Aorta (tissue), 5 donors: ENCODE measurements at regions of chr12 and their contacts with region 1.

Region 1: GRCh38 chr12:131894313-131894860 is at the start of gene ULK1:
- DNase-seq: peak; percentile 95 to 98
- ATAC-seq: peak; percentile 87
- H3K4me3 ChIP-seq: peak within 1 kb of the TSS; percentile 96 to 97
- H3K27ac ChIP-seq: peak within 1 kb of the TSS; percentile 84 to 92
- H3K4me1 ChIP-seq: no peaks in the 10 kb centered on the region
- H3K27me3 ChIP-seq: no peaks in the 10 kb centered on the region
- total RNA-seq, gene ULK1: 39.9 to 56.5 TPM

Region 2: GRCh38 chr12:131872185-131873051 is 22.0 kb before region 1 on chr12:
- intact Hi-C with region 1: no loop called
- DNase-seq: no peak
- ATAC-seq: no peak
- H3K4me3 ChIP-seq: no peak overlapping the region
- H3K27ac ChIP-seq: no peak overlapping the region
- H3K4me1 ChIP-seq: no peaks in the 10 kb centered on the region
- H3K27me3 ChIP-seq: no peaks in the 10 kb centered on the region

Region 3: DNA sequence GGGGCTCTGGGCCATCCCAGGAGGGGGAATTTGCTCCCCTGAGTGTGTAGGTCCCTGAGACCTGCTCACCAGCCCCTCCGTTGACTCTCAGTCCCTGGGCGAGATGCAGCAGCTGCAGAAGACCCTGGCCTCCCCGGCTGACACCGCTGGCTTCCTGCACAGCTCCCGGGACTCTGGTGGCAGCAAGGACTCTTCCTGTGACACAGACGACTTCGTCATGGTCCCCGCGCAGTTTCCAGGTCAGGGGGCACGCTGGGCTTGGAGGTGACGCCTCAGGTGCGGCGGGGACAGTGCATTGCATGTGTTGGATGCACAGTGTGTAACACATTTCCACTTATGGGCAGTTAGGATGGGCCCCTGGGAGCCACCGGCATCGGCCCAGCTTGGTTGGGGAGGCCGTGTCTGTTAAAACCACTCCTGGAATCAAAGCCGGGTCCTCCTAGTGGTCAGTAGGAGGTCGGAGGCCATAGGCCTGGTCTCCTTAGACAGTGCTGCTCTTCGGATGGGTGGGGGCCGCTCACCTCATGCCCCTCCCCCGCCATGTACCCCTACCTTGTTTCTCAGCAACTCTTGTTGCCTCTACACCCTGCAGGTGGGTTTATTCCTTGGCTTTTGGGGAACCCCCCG is 17.6 kb after region 1 on chr12:
- intact Hi-C with region 1: loop called in 1 of 2 experiments (anchors 2 kb)
- DNase-seq: peak in 1 of 2 donors; percentile 38
- ATAC-seq: no peak
- H3K4me3 ChIP-seq: no peak overlapping the region
- H3K27ac ChIP-seq: peak overlapping the region in 1 of 2 donors; percentile 39
- H3K4me1 ChIP-seq: no peaks in the 10 kb centered on the region
- H3K27me3 ChIP-seq: no peaks in the 10 kb centered on the region

Region 4: GRCh38 chr12:131928711-131929580 is 34.6 kb after region 1 on chr12 and contains the start of gene PUS1:
- intact Hi-C with region 1: loop called in 1 of 2 experiments (anchors 5 kb)
- DNase-seq: peak; percentile 97 to 98
- ATAC-seq: peak; percentile 96
- H3K4me3 ChIP-seq: peak within 1 kb of the TSS; percentile 86 to 93
- H3K27ac ChIP-seq: peak within 1 kb of the TSS in 1 of 2 donors; percentile 9
- H3K4me1 ChIP-seq: no peaks in the 10 kb centered on the region
- H3K27me3 ChIP-seq: no peaks in the 10 kb centered on the region
- total RNA-seq, gene PUS1: 17.7 to 20.0 TPM

Region 5: GRCh38 chr12:131949431-131950181 is 55.2 kb after region 1 on chr12 and contains the start of gene EP400:
- intact Hi-C with region 1: loop called in 1 of 2 experiments (anchors 1 kb)
- DNase-seq: peak; percentile 98 to 99
- ATAC-seq: peak; percentile 99
- H3K4me3 ChIP-seq: peak within 1 kb of the TSS; percentile 84 to 90
- H3K27ac ChIP-seq: peak within 1 kb of the TSS; percentile 24 to 82
- H3K4me1 ChIP-seq: no peaks in the 10 kb centered on the region
- H3K27me3 ChIP-seq: no peaks in the 10 kb centered on the region
- total RNA-seq, gene EP400: 39.9 to 52.9 TPM

Region 6: DNA sequence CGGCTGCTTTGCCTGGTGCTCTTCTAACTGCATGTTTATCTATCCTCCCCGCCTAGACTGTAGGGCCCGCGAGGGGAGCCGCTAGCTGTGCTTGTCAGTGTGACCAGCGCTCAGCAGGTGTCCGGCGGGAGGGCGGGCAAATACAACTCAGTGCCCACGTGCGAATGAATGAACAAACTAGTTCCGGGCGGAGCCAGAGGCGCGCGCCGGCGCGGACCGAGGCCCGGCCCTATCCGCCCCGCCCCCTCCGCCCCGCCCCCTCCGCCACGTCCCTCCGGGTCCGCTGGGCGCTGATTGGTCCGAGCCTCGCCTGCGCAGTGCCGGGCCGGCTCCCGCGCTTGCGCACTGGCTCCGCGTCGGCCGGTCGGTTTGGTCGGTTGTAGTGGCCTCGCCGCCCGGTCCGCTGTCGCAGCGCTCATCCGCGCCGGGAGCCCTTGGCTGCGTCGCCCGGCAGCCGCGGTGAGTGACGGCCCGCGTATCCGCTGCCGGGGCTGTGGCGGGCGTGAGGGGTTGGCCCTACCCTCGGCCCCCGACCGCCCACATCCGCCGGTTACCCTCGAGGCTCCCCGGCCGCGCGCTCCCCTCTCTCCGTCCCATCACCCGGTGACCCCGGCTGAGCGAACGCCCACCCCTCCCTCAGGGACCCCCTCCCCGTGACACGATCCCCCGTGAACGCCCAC is 189.7 kb after region 1 on chr12:
- intact Hi-C with region 1: no loop called
- DNase-seq: peak; percentile 94 to 96
- ATAC-seq: peak; percentile 97
- H3K4me3 ChIP-seq: peak overlapping the region; percentile 66 to 90
- H3K27ac ChIP-seq: peak overlapping the region in 1 of 2 donors; percentile 89
- H3K4me1 ChIP-seq: no peaks in the 10 kb centered on the region
- H3K27me3 ChIP-seq: no peaks in the 10 kb centered on the region

Region 7: GRCh38 chr12:132144115-132144812 is 249.9 kb after region 1 on chr12 and contains the starts of genes DDX51 and NOC4L:
- intact Hi-C with region 1: loop called in 1 of 2 experiments (anchors 10 kb)
- DNase-seq: peak; percentile 95 to 98
- ATAC-seq: peak; percentile 94
- H3K4me3 ChIP-seq: peak within 1 kb of the TSS; percentile 67 to 82
- H3K27ac ChIP-seq: peak within 1 kb of the TSS in 1 of 2 donors; percentile 39
- H3K4me1 ChIP-seq: no peaks in the 10 kb centered on the region
- H3K27me3 ChIP-seq: no peaks in the 10 kb centered on the region
- total RNA-seq, gene DDX51: 14.3 to 14.9 TPM
- total RNA-seq, gene NOC4L: 10.8 to 12.3 TPM

Region 8: GRCh38 chr12:132489602-132490239 is 595.3 kb after region 1 on chr12 and contains the start of gene FBRSL1:
- intact Hi-C with region 1: loop called in 1 of 2 experiments (anchors 5 kb)
- DNase-seq: peak; percentile 92 to 97
- ATAC-seq: peak; percentile 92
- H3K4me3 ChIP-seq: peak within 1 kb of the TSS; percentile 81 to 85
- H3K27ac ChIP-seq: no peak within 1 kb of the TSS
- H3K4me1 ChIP-seq: peaks cover 0 to 2% of the 10 kb centered on the region in 2 donors
- H3K27me3 ChIP-seq: no peaks in the 10 kb centered on the region
- total RNA-seq, gene FBRSL1: 49.0 to 51.0 TPM